GM18951 (cell line): ENCODE measurements at regions of chr11 and their contacts with region 1.

Region 1: GRCh38 chr11:112289588-112290492 is 29.2 kb upstream of the PLET1 start:
- POLR2A ChIP-seq: no peak

Region 2: DNA sequence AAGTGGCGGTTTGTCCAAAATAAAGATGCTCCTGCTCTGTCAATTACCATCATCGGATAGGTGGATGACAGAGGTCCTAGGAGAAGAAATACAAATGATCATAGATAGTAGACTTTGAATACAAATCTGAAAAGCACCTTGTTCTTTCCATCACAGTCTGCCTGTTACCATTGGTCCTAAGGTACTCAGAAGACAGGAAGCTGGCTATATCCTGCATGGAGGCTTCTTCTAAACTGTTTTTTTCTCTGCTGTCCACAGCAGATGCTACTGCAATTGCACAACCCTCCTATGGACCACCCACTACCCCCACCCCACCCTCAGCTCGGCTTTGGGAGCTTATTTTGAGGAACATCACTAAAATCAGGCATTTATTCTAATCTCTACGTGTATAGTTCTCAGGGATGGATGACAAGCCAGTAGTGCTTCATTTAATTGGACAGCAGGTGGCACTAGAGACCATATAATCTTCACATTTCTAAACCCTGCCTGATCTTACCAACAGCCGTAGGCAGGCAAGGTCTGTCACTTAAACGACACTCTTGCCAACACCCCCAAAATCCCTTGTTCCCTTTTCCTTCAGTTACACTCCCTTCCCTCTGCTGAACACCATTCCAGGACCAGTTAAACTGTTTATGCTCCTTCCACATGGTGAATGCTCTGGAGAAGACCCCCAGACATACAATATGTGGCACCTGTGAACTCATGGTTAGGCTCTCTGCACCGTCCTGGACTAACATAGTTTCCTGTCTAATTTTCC is 70.2 kb before region 1 on chr11:
- in situ Hi-C with region 1: loop called (anchors 5 kb)
- POLR2A ChIP-seq: no peak

Region 3: GRCh38 chr11:112382561-112382960 is 92.7 kb after region 1 on chr11:
- in situ Hi-C with region 1: no loop called
- POLR2A ChIP-seq: no peak